Endothelial cell of umbilical vein (primary cell): ENCODE measurements at regions of chr1 and their contacts with region 1.

Region 1: GRCh38 chr1:43934101-43934985 is 742 bp downstream of the ARTN start:
- DNase-seq: peak; percentile 42
- H3K4me3 ChIP-seq: no peak overlapping the region
- H3K27ac ChIP-seq: no peak overlapping the region
- H3K4me1 ChIP-seq: peaks cover 5% of the 10 kb centered on the region
- H3K27me3 ChIP-seq: peaks cover 3 to 9% of the 10 kb centered on the region in 2 experiments
- CTCF ChIP-seq: peak; percentile 63 to 91
- POLR2A ChIP-seq: no peak

Region 2: GRCh38 chr1:43688594-43689000 is 245.7 kb before region 1 on chr1:
- CTCF ChIA-PET with region 1: interaction called, 19 read pairs
- POLR2A ChIA-PET with region 1: no interaction called
- dilution Hi-C with region 1: no loop called
- intact Hi-C with region 1: no loop called
- DNase-seq: peak; percentile 64
- H3K4me3 ChIP-seq: no peak overlapping the region
- H3K27ac ChIP-seq: peak overlapping the region; percentile 2
- H3K4me1 ChIP-seq: peaks cover 18% of the 10 kb centered on the region
- H3K27me3 ChIP-seq: no peaks in the 10 kb centered on the region
- CTCF ChIP-seq: no peak
- POLR2A ChIP-seq: no peak

Region 3: GRCh38 chr1:43783671-43784205 is 150.6 kb before region 1 on chr1:
- CTCF ChIA-PET with region 1: interaction called, 28 read pairs
- POLR2A ChIA-PET with region 1: no interaction called
- dilution Hi-C with region 1: no loop called
- intact Hi-C with region 1: no loop called
- DNase-seq: no peak
- H3K4me3 ChIP-seq: no peak overlapping the region
- H3K27ac ChIP-seq: peak overlapping the region; percentile 30
- H3K4me1 ChIP-seq: peaks cover 18% of the 10 kb centered on the region
- H3K27me3 ChIP-seq: no peaks in the 10 kb centered on the region
- CTCF ChIP-seq: no peak
- POLR2A ChIP-seq: no peak

Region 4: GRCh38 chr1:43861337-43861736 is 73.0 kb before region 1 on chr1:
- CTCF ChIA-PET with region 1: interaction called, 13 read pairs
- POLR2A ChIA-PET with region 1: no interaction called
- dilution Hi-C with region 1: no loop called
- intact Hi-C with region 1: no loop called
- DNase-seq: peak; percentile 69
- H3K4me3 ChIP-seq: no peak overlapping the region
- H3K27ac ChIP-seq: no peak overlapping the region
- H3K4me1 ChIP-seq: peaks cover 8% of the 10 kb centered on the region
- H3K27me3 ChIP-seq: no peaks in the 10 kb centered on the region
- CTCF ChIP-seq: no peak
- POLR2A ChIP-seq: no peak

Region 5: DNA sequence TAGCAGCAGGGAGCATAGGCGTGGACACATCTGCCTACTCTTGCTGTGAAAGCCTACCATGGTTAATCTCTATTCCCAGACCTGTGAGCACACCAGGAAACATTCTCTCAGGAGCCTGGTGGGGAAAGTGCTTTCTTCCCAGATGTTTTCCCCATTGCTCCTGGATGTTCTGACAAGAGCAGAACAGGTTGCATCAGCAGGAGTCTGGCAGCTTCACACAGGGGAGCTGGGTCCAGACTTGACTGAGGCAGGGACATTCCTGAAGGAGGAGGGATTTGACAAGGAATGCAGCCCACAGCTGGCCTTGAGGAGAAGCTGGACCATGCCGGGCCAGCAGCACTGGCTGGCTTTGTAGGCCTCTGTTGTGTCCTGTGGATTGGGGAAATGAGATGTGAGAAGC is 21.7 kb before region 1 on chr1:
- CTCF ChIA-PET with region 1: interaction called, 14 read pairs
- POLR2A ChIA-PET with region 1: no interaction called
- dilution Hi-C with region 1: no loop called
- intact Hi-C with region 1: no loop called
- DNase-seq: no peak
- H3K4me3 ChIP-seq: no peak overlapping the region
- H3K27ac ChIP-seq: no peak overlapping the region
- H3K4me1 ChIP-seq: no peaks in the 10 kb centered on the region
- H3K27me3 ChIP-seq: no peaks in the 10 kb centered on the region
- CTCF ChIP-seq: no peak
- POLR2A ChIP-seq: no peak

Region 6: DNA sequence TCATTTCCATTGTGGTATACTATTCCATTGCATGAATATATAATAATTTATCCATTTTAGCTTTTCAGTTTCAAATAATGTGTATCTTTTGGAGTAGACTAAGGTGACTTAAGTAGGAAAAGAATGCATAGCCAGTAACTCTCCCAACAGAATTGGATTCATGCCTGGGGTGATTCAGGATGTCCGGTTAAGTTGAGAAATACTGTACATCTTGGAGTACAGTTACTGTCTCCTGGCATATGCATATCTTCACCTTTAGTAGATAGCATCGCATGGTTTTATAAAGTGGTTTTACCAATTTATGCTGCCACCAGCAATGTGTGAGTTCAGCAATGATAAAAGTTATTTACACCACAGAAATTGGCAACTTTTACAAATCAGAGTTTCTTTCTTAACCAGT is 115.5 kb after region 1 on chr1:
- CTCF ChIA-PET with region 1: interaction called, 22 read pairs
- POLR2A ChIA-PET with region 1: no interaction called
- dilution Hi-C with region 1: no loop called
- intact Hi-C with region 1: no loop called
- DNase-seq: peak; percentile 12
- H3K4me3 ChIP-seq: no peak overlapping the region
- H3K27ac ChIP-seq: no peak overlapping the region
- H3K4me1 ChIP-seq: peaks cover 26% of the 10 kb centered on the region
- H3K27me3 ChIP-seq: peaks cover 0 to 4% of the 10 kb centered on the region in 2 experiments
- CTCF ChIP-seq: no peak
- POLR2A ChIP-seq: no peak